Heart left ventricle (tissue), 16 donors: ENCODE measurements at regions of chr2 and their contacts with region 1.

Region 1: DNA sequence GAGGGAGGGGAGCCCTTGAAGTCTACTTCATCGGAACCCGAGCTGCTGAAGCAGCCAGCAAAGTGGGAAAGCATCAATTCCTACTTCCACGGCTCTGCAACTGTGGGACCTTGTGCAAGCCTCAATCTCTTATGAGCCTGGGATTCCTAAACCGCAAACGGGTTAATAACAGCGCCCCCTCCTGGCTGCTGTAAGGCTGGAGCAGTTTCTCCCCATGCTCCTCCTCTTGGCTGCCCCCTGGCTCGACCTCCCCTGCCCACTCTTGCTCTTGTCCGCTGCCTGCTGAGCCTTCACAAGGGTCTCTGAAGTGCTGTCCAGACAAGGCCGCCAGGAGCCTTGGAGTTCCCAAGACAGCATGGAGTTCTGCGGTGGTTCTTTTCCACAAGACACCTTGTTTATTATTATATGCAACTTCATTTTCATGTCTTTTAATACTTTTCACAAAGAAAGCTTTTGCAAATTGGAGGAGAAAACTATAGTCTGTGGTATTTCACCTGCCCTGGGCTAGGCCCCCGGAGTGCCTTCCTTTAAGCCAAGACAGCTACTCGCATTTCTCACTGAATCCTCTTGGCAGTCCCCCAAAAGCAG is 157.2 kb downstream of the DDX1 start:
- DNase-seq: no peak
- ATAC-seq: no peak
- H3K4me3 ChIP-seq: no peak overlapping the region
- H3K27ac ChIP-seq: peak overlapping the region in 1 of 12 donors; percentile 40
- H3K4me1 ChIP-seq: peaks cover 0 to 41% (median 20%) of the 10 kb centered on the region in 12 donors
- H3K27me3 ChIP-seq: no peaks in the 10 kb centered on the region
- CTCF ChIP-seq: peak in 10 of 12 donors; percentile 17 to 39 (median 26)
- POLR2A ChIP-seq: no peak

Region 2: GRCh38 chr2:15667809-15668556 is 80.8 kb before region 1 on chr2:
- intact Hi-C with region 1: loop called in 1 of 10 experiments (anchors 10 kb)
- DNase-seq: no peak
- ATAC-seq: peak in 3 of 4 donors; percentile 42 to 53 (median 47)
- H3K4me3 ChIP-seq: no peak overlapping the region
- H3K27ac ChIP-seq: no peak overlapping the region
- H3K4me1 ChIP-seq: peaks cover 0 to 10% (median 0%) of the 10 kb centered on the region in 12 donors
- H3K27me3 ChIP-seq: peaks cover 0 to 5% (median 0%) of the 10 kb centered on the region in 9 donors
- CTCF ChIP-seq: no peak
- POLR2A ChIP-seq: no peak